Brain microvascular endothelial cell (primary cell): ENCODE measurements at regions of chr19 and their contacts with region 1.

Region 1: GRCh38 chr19:39341719-39342604 is at the start of gene SAMD4B:
- DNase-seq: peak; percentile 94
- H3K4me3 ChIP-seq: peak within 1 kb of the TSS; percentile 90
- H3K27ac ChIP-seq: peak within 1 kb of the TSS; percentile 58
- H3K27me3 ChIP-seq: no peaks in the 10 kb centered on the region
- CTCF ChIP-seq: peak; percentile 69

Region 2: DNA sequence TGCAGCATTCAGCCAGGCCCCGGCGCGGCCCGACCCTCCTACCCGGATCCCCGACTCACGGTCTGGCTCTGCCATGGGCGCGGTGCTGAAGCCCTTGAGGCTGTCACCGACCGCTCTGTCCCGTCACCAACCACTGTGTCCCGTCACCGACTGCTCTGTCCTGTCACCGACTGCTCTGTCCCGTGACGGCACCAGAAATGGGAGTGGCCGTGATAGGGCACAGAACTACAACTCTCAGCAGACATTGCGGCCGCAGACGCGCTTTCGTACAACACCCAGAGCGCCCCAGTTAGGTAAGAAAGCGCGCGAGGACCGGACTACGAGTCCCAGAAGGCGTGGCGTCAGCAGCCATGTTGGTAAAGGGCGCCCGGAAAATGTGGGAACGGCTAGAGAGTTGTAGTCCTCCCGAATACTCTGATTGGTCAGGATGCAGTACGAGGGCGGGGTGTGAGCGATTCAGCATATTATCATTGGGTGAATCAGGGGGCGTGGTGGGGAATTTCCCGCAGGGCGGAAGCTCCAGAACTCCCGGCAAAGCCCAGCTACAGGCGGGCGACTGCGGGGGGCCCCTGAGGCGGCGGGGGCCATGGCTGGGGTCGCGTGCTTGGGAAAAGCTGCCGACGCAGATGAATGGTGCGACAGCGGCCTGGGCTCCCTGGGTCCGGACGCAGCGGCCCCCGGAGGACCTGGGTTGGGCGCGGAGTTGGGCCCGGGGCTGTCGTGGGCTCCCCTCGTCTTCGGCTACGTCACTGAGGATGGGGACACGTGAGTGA is 442.3 kb before region 1 on chr19 and contains the starts of genes NFKBIB and SIRT2:
- in situ Hi-C with region 1: no loop called
- DNase-seq: peak; percentile 100
- H3K4me3 ChIP-seq: peak within 1 kb of the TSS; percentile 92
- H3K27ac ChIP-seq: peak within 1 kb of the TSS; percentile 92
- H3K27me3 ChIP-seq: no peaks in the 10 kb centered on the region
- CTCF ChIP-seq: no peak

Region 3: DNA sequence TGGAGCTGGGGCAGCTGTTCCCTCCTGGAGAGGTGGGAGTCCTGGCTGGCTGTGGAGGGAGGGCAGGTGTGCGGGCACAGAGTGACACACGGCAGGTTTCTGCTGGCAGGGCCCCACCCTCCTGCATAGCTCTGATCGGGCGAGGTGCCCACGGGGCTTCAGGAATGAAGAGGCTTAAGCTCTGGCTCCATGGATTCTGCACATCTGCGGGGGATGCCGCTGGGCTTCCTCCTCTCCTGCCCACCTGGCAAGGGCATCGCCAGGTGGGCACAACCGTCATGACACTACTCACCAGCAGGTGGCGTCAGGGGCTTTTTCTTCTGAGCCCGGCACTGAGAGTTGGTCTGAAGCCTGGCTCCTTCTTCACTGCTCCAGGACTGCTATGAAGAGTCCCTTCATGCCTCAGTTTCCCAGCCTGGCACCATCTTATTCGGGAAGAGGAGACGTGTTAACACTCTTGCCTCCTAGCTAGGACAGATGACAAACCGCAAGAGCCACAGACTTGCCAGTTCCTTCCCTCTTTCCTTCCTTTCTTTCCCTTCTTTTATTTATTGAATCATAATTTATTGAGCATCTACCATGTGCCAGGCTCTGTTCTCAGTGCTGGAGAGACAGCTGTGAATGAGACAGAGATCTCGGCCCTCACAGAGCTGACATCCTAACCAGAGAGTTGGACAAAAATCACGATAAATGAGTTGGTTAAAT is 231.5 kb before region 1 on chr19:
- in situ Hi-C with region 1: loop called (anchors 25 kb)
- DNase-seq: no peak
- H3K4me3 ChIP-seq: no peak overlapping the region
- H3K27ac ChIP-seq: no peak overlapping the region
- H3K27me3 ChIP-seq: no peaks in the 10 kb centered on the region
- CTCF ChIP-seq: peak; percentile 89

Region 4: DNA sequence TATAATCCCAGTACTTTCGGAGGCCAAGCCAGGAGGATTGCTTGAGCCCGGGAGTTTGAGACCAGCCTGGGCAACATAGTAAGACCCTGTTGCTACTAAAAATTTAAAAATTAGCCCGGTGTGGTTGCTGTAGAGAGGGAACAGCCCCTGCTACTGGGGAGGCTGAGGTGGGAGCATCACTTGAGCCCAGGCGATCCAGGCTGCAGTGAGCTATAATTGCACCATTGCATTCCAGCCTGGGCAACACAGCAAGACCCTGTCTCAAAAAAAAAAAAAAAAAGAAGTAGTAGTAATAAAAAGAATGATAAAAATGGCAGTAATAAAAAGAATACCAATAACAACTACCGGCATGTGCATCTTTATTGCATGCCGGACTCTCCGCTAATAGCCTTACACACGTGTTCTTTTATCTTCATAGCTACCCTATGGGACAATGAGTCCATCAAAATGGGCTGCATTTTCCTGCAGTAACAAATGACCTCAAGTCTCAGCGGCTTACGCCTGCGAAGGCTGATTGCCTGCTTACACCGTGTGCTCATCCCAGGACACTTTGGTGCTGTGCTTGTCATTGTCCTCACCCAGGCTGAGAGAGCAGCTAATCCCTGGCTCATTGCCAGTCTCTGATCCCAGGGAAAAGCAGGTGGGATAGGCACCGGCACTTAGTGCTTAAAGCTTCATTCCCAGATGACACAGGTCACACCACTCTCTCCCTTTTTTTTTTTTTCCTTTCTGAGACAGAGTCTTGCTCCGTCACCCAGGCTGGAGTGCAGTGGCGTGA is 123.5 kb before region 1 on chr19:
- in situ Hi-C with region 1: no loop called
- DNase-seq: no peak
- H3K4me3 ChIP-seq: no peak overlapping the region
- H3K27ac ChIP-seq: no peak overlapping the region
- H3K27me3 ChIP-seq: no peaks in the 10 kb centered on the region
- CTCF ChIP-seq: no peak

Region 5: DNA sequence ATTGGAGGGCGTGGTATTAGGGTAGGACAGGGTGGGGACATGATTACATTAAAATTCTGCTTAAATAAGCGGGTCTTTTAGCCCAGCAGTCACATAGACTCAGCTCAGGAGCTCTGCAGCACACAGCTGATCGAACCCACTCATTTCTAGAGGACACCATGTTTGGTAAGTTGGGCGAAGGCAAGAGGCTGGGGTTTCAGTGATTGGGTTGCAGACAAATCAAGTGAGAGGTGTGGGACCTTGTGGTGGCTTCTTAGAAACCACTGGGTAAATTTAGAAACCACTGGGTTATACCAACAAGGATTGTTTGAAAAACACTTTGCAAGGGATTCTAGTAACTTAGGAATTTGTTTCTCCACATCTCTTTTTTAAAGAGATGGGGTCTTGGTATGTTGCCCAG is 436.8 kb after region 1 on chr19 and contains the start of gene LEUTX:
- in situ Hi-C with region 1: no loop called
- DNase-seq: no peak
- H3K4me3 ChIP-seq: no peak within 1 kb of the TSS
- H3K27ac ChIP-seq: no peak within 1 kb of the TSS
- H3K27me3 ChIP-seq: no peaks in the 10 kb centered on the region
- CTCF ChIP-seq: no peak